ENCODE measurements at regions of chr3 and their contacts with region 1.

Region 1: DNA sequence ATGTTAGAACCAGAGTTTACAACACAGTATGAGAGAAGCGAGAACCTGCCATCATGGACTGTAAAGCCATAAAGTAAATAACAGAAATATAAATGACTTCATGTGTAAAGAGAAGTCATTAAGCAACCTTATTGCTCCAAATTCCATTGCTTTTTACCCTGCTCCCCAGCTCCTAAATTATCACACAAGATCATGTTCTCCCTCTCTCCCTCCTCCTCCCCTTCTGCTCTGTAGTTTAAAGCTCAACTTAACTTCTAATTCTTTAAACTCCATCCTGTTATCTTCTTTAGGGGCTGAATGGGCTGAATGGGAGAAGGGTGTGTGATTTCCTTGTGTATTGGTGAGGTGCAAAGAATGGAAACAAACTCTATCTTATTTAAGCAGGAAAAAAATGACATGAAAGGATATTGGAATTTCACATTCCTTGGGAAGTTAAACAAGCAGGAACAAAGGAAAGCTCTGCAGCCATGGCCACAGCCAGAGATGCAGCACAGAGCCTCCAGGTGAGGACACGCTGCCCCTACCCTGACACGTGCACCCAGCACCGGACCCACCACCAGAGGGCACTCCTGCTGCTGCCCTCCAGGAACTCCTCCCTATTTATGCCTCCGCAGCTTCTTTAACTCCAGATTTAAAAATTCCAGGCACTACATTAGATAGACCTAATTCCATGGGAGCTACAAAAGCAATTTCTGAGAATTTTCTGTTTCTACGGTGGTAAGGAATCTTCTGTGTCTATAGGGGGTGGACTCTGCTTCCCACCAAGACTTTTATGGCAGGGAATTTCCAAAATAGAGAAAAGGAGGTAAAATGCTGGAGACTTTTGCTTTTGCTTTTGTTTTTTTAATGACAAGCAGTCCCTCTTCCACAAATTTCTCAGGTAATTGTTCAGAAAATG is 76.9 kb upstream of the ABI3BP start:
- DNase-seq: peak; percentile 66
- ATAC-seq: peak; percentile 62

Region 2: DNA sequence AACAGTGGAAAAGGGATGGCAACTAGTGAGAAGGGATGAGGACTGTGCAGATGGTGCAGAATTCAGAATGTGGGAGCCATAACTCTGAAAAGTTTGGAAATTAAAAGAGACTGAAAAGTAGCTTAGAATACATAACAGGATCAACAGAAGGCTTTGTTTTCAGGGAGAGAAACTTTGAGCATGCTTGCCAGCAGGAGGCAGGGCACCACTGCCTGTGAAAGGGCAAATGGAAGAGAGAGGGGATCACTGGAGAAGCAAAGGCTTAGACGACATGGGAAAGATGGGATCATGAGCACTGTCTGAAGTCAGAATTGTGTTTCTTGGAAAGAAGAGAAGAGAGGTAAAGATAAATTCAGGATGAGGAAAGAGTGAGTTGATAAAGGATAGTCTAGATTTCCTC is 176.6 kb before region 1 on chr3:
- intact Hi-C with region 1: loop called (anchors 10 kb)
- DNase-seq: no peak
- ATAC-seq: no peak

Region 3: GRCh38 chr3:101195951-101196713 is 126.0 kb after region 1 on chr3:
- intact Hi-C with region 1: loop called (anchors 1 kb)
- DNase-seq: no peak
- ATAC-seq: peak; percentile 80

Region 4: DNA sequence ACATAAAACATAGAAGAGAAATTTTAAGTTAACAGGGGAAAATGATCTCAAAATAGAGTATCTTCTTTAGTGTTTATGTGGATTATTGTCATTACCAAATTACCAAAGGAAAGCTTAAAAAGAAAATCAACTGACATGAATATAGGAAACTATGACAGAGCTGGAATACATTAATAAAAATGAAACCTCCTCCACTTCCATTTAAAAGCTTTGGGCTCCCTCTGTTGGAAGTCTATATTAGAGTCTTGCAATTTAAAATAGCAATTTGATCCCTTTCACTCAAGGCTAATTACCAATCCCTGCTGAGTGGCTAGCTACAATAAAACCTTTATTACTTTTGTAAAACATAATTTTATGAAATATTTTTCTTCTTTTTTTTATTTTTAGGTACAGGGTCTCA is 311.7 kb after region 1 on chr3:
- intact Hi-C with region 1: loop called (anchors 10 kb)
- DNase-seq: no peak
- ATAC-seq: no peak